ENCODE measurements at regions of chr9 and their contacts with region 1.

Region 1: GRCh38 chr9:4382722-4383317 is 83.0 kb upstream of the GLIS3 start:
- DNase-seq: peak in 4 of 5 donors; percentile 9 to 29 (median 25)
- H3K4me3 ChIP-seq: no peak overlapping the region
- H3K4me3 Mint-ChIP-seq: no peak overlapping the region
- H3K27ac ChIP-seq: no peak overlapping the region
- H3K27ac Mint-ChIP-seq: no peak overlapping the region
- H3K4me1 ChIP-seq: no peaks in the 10 kb centered on the region
- H3K4me1 Mint-ChIP-seq: no peaks in the 10 kb centered on the region
- H3K27me3 ChIP-seq: no peaks in the 10 kb centered on the region
- H3K27me3 Mint-ChIP-seq: peaks cover 1 to 7% of the 10 kb centered on the region in 2 donors

Region 2: GRCh38 chr9:4366591-4367330 is 16.1 kb before region 1 on chr9:
- CTCF ChIA-PET with region 1: interaction called, 11 read pairs
- POLR2A ChIA-PET with region 1: no interaction called
- intact Hi-C with region 1: no loop called
- DNase-seq: peak in 3 of 5 donors; percentile 13 to 27 (median 21)
- H3K4me3 ChIP-seq: no peak overlapping the region
- H3K4me3 Mint-ChIP-seq: no peak overlapping the region
- H3K27ac ChIP-seq: no peak overlapping the region
- H3K27ac Mint-ChIP-seq: no peak overlapping the region
- H3K4me1 ChIP-seq: no peaks in the 10 kb centered on the region
- H3K4me1 Mint-ChIP-seq: no peaks in the 10 kb centered on the region
- H3K27me3 ChIP-seq: no peaks in the 10 kb centered on the region
- H3K27me3 Mint-ChIP-seq: peaks cover 1 to 4% of the 10 kb centered on the region in 2 donors

Region 3: DNA sequence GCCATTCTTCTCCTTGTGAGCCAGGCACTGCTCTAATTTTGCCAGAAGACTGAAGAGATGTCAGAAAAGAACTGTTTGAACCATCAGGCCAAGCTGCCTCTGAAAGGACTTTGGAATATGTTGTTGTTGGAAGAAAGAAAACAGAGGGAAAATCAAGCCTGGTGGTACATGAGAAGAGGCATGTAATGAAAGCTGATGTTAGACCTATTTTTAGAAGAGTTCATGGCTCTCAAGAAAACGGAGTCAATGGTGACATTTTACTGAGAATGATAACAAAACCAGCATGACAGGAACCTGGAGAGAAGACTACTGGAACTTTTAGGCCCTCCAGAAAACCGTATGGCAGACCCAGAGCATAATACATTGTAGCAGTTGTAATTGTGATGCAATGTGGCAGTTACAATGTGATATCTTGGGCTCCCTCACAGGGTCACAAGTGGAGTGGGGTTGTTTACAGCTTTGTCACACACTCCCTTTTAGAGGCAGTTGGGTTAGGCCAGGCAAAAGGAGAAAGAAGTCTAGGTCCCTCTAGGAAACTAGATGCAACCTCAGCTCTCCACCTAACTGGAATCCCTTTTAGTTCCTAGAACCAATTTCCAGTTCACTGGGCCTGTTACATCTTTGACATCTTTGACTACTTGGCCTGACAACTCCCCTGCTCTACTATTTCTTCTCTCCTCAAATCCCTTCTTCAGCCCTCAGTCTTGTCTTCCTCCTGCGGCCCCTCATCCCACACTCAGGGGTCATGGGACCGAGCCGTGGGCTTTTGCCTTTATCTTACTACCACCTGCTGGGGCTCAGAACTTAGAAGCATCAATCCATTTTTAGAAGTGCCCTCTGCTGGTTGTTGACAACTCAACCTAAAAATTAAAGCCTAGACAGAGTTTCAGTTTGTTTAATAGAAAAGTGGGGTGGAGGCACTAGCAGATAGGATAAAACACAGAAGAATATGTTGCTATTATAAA is 541.0 kb after region 1 on chr9:
- CTCF ChIA-PET with region 1: no interaction called
- POLR2A ChIA-PET with region 1: no interaction called
- intact Hi-C with region 1: loop called (anchors 2 kb)
- DNase-seq: peak in 4 of 5 donors; percentile 28 to 41 (median 28)
- H3K4me3 ChIP-seq: no peak overlapping the region
- H3K4me3 Mint-ChIP-seq: no peak overlapping the region
- H3K27ac ChIP-seq: no peak overlapping the region
- H3K27ac Mint-ChIP-seq: peak overlapping the region in 1 of 7 donors; percentile 2
- H3K4me1 ChIP-seq: no peaks in the 10 kb centered on the region
- H3K4me1 Mint-ChIP-seq: peaks cover 0 to 6% (median 3%) of the 10 kb centered on the region in 4 donors
- H3K27me3 ChIP-seq: no peaks in the 10 kb centered on the region
- H3K27me3 Mint-ChIP-seq: no peaks in the 10 kb centered on the region

Measured in CD4-positive, alpha-beta memory T cell (primary cell).